Adrenal gland (tissue), 19 donors: ENCODE measurements at regions of chr1 and their contacts with region 1.

Region 1: GRCh38 chr1:168572633-168573032 is 3.8 kb upstream of the XCL1 start:
- DNase-seq: no peak
- H3K4me3 ChIP-seq: no peak overlapping the region
- H3K27ac ChIP-seq: no peak overlapping the region
- H3K4me1 ChIP-seq: no peaks in the 10 kb centered on the region
- H3K27me3 ChIP-seq: no peaks in the 10 kb centered on the region
- CTCF ChIP-seq: no peak
- POLR2A ChIP-seq: no peak

Region 2: GRCh38 chr1:168439456-168440375 is 132.9 kb before region 1 on chr1:
- intact Hi-C with region 1: loop called in 1 of 2 experiments (anchors 5 kb)
- DNase-seq: peak; percentile 68 to 92 (median 78)
- H3K4me3 ChIP-seq: peak overlapping the region in 2 of 4 donors; percentile 5 to 40
- H3K27ac ChIP-seq: no peak overlapping the region
- H3K4me1 ChIP-seq: no peaks in the 10 kb centered on the region
- H3K27me3 ChIP-seq: no peaks in the 10 kb centered on the region
- CTCF ChIP-seq: peak; percentile 48 to 93 (median 84)
- POLR2A ChIP-seq: no peak

Region 3: GRCh38 chr1:168520052-168520751 is 52.4 kb before region 1 on chr1:
- intact Hi-C with region 1: no loop called
- DNase-seq: no peak
- H3K4me3 ChIP-seq: no peak overlapping the region
- H3K27ac ChIP-seq: no peak overlapping the region
- H3K4me1 ChIP-seq: no peaks in the 10 kb centered on the region
- H3K27me3 ChIP-seq: no peaks in the 10 kb centered on the region
- CTCF ChIP-seq: no peak
- POLR2A ChIP-seq: no peak

Region 4: DNA sequence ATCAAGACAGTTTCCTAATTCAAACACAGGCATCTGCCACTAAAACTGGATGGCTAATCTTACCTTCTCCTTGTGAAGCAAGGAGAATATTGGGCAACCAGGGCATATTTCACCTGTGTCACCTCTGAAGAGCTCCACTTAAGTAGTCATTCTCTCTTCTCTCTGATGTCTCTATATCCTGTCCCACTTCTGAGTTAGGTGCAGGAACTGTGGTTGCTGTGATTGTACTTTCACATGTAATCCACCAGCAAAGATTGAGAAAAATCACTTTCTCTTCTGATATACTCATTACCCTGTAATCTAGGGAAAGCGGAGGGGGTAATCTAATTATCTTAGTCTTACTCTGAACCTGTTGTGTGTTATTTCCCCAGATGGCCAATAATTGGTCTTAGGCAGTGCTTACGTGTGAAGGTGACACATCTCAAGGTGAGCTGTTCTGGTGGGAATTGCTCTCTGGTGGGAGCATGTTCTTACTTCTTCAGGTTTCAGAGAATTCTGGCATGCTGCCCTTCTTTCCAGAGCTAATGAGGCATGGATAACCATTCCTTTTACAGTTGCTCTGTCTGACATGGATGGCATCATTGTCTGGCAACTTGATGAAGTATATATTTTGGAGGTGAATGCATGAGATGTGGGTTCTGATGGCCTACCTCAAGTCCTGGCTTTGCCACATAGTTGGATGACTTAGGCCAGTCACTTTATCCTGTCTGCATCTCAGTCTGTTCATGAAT is 40.9 kb before region 1 on chr1:
- intact Hi-C with region 1: no loop called
- DNase-seq: no peak
- H3K4me3 ChIP-seq: no peak overlapping the region
- H3K27ac ChIP-seq: no peak overlapping the region
- H3K4me1 ChIP-seq: no peaks in the 10 kb centered on the region
- H3K27me3 ChIP-seq: no peaks in the 10 kb centered on the region
- CTCF ChIP-seq: no peak
- POLR2A ChIP-seq: no peak